ENCODE measurements at regions of chr7 and their contacts with region 1.

Region 1: GRCh38 chr7:25259587-25260243 is 31.4 kb upstream of the NPVF start:
- DNase-seq: peak; percentile 33 to 86
- ATAC-seq: peak; percentile 60 to 80 (median 78)
- H3K4me3 ChIP-seq: no peak overlapping the region
- H3K4me3 Mint-ChIP-seq: no peak overlapping the region
- H3K27ac ChIP-seq: no peak overlapping the region
- H3K27ac Mint-ChIP-seq: no peak overlapping the region
- H3K4me1 ChIP-seq: no peaks in the 10 kb centered on the region
- H3K4me1 Mint-ChIP-seq: peaks cover 16 to 19% of the 10 kb centered on the region in 2 donors
- H3K27me3 ChIP-seq: no peaks in the 10 kb centered on the region
- H3K27me3 Mint-ChIP-seq: peaks cover 13 to 20% of the 10 kb centered on the region in 2 donors
- CTCF ChIP-seq: peak; percentile 67

Region 2: DNA sequence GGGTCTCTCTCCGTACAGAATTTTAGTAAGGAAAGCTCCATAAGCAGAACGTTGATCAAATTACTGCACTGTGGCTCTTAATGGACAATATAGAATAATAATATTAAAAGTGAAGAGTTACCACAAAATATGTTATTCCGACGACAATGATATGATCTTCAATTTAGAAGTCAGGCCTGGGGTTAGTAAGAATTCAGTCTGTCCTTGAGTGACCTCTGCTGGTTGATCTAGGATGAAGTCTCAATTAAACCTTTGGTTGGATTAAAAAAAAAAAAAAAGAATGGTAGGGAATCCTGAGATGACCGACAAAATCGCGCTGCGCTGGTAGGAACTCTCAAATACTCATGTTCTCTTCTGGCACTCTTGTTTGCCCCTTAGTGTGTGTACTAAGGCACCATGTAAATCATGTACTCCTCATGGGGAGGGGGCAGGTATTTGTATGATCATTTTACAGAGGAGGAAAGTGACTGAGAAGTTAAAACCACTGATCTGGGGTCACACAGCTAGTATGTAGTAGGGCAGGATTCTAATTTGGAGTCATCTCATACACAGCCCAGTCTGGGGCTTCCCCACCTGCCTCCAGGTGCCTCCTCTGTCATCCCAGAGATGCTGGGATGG is 129.9 kb after region 1 on chr7:
- intact Hi-C with region 1: loop called (anchors 5 kb)
- DNase-seq: peak in 1 of 2 donors; percentile 70
- ATAC-seq: no peak
- H3K4me3 ChIP-seq: no peak overlapping the region
- H3K4me3 Mint-ChIP-seq: no peak overlapping the region
- H3K27ac ChIP-seq: no peak overlapping the region
- H3K27ac Mint-ChIP-seq: no peak overlapping the region
- H3K4me1 ChIP-seq: no peaks in the 10 kb centered on the region
- H3K4me1 Mint-ChIP-seq: no peaks in the 10 kb centered on the region
- H3K27me3 ChIP-seq: no peaks in the 10 kb centered on the region
- H3K27me3 Mint-ChIP-seq: peaks cover 9 to 31% of the 10 kb centered on the region in 2 donors
- CTCF ChIP-seq: no peak

Region 3: GRCh38 chr7:25565949-25566348 is 306.2 kb after region 1 on chr7:
- intact Hi-C with region 1: loop called (anchors 1 kb)
- DNase-seq: peak; percentile 49 to 85
- ATAC-seq: peak; percentile 59 to 80 (median 69)
- H3K4me3 ChIP-seq: no peak overlapping the region
- H3K4me3 Mint-ChIP-seq: no peak overlapping the region
- H3K27ac ChIP-seq: no peak overlapping the region
- H3K27ac Mint-ChIP-seq: no peak overlapping the region
- H3K4me1 ChIP-seq: no peaks in the 10 kb centered on the region
- H3K4me1 Mint-ChIP-seq: peaks cover 0 to 5% of the 10 kb centered on the region in 2 donors
- H3K27me3 ChIP-seq: no peaks in the 10 kb centered on the region
- H3K27me3 Mint-ChIP-seq: peaks cover 4 to 11% of the 10 kb centered on the region in 2 donors
- CTCF ChIP-seq: peak; percentile 100

Region 4: DNA sequence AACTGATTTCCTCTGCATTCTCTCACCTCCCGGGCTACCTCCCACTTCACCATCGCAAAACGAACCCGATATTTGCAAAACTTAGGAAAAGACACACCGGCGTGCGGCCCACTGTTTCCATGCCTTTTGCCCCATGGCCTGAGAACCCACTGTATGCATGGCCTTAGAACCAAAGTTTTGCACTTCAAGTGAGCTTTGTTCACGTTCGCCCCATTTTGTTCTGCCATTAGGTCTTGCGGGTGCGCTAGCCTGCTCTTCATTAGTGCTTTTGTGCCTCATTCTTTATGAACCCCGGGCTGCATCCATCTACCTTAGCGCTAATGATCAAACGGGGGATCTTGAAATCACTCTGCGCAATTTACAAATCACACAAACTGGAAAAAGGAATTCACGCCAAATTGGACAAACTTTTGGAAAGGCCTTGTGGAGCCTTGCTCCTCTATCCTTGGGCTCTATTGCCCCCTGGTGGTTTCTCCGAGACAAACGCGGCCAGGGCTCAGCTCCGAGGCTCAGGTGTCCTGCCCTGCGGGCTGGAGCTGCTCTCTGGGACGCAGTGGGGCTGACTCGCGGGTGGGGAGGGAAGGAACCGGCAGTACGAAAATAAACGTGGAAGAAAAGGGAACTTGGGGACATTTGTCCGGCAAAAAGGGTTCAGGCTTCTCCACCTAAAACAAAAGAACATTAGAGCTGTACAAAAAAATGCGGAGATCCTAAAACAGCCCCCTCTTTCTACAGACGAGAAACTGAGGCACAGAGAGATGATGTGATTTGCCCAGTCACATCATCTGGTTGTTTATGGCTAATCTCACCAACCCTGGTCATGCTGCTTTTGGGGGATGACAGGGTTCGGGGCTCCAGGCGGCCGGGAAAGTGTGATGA is 591.9 kb after region 1 on chr7:
- intact Hi-C with region 1: loop called (anchors 5 kb)
- DNase-seq: peak in 1 of 2 donors; percentile 74
- ATAC-seq: peak in 2 of 3 donors; percentile 37 to 49
- H3K4me3 ChIP-seq: no peak overlapping the region
- H3K4me3 Mint-ChIP-seq: no peak overlapping the region
- H3K27ac ChIP-seq: no peak overlapping the region
- H3K27ac Mint-ChIP-seq: peak overlapping the region in 1 of 2 donors; percentile 54
- H3K4me1 ChIP-seq: peaks cover 13% of the 10 kb centered on the region
- H3K4me1 Mint-ChIP-seq: peaks cover 0 to 8% of the 10 kb centered on the region in 2 donors
- H3K27me3 ChIP-seq: peaks cover 53% of the 10 kb centered on the region
- H3K27me3 Mint-ChIP-seq: peaks cover 56 to 63% of the 10 kb centered on the region in 2 donors
- CTCF ChIP-seq: no peak

Measured in natural killer cell (primary cell).